ENCODE measurements at regions of chr2 and their contacts with region 1.

Region 1: GRCh38 chr2:68734688-68735525 is at the start of gene ARHGAP25:
- DNase-seq: peak in 7 of 9 experiments; percentile 25 to 83 (median 61)
- ATAC-seq: peak; percentile 65
- H3K4me3 ChIP-seq: peak within 1 kb of the TSS; percentile 61 to 84
- H3K4me3 Mint-ChIP-seq: no peak within 1 kb of the TSS
- H3K27ac ChIP-seq: peak within 1 kb of the TSS; percentile 62 to 81
- H3K27ac Mint-ChIP-seq: no peak within 1 kb of the TSS
- H3K4me1 ChIP-seq: peaks cover 41% of the 10 kb centered on the region
- H3K4me1 Mint-ChIP-seq: peaks cover 38% of the 10 kb centered on the region
- H3K27me3 ChIP-seq: no peaks in the 10 kb centered on the region
- H3K27me3 Mint-ChIP-seq: no peaks in the 10 kb centered on the region
- CTCF ChIP-seq: no peak
- total RNA-seq, gene ARHGAP25: 35.8 to 36.7 TPM

Region 2: DNA sequence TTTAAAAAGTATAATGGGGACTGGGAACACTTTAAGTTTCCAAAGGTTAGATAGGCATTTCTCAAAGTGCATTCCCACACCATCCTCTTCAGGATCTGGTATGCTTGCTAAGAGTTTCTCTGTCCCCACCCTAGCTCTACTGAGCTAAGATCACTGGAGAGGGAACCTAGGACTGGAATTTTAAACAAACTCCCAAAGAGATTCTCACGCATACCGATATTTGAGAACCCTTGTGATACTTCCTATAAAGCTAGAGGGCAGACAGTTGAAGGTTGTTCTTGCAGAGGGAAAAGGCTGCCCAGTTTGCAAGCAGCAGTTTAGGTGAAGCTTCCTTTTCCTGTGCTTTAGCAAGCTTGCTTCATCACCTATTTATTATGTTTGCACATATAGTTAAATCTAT is 418.8 kb before region 1 on chr2:
- CTCF ChIA-PET with region 1: no interaction called
- POLR2A ChIA-PET with region 1: no interaction called
- intact Hi-C with region 1: no loop called
- DNase-seq: no peak
- ATAC-seq: no peak
- H3K4me3 ChIP-seq: no peak overlapping the region
- H3K4me3 Mint-ChIP-seq: no peak overlapping the region
- H3K27ac ChIP-seq: no peak overlapping the region
- H3K27ac Mint-ChIP-seq: no peak overlapping the region
- H3K4me1 ChIP-seq: peaks cover 5% of the 10 kb centered on the region
- H3K4me1 Mint-ChIP-seq: peaks cover 12% of the 10 kb centered on the region
- H3K27me3 ChIP-seq: peaks cover 8 to 9% of the 10 kb centered on the region in 2 experiments
- H3K27me3 Mint-ChIP-seq: peaks cover 49% of the 10 kb centered on the region
- CTCF ChIP-seq: no peak

Region 3: DNA sequence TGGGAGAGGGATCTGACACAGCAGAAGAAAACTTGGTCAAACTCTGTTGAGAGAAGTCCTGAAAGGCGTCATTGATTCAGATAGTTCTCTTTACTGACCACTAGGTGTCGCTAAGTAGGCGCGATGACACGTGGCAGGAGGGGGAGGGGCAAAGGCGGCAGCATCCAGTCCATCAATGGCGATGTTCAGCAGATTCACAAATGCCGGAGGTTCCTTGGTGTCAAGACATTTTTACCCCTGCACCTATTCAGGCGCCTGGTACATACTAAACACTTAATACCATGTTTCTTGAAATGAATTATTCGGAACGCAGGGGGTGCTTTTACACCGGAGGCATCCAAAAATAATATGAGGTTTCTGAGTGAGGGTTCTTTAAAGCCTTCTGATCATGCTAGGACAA is 372.8 kb before region 1 on chr2:
- CTCF ChIA-PET with region 1: no interaction called
- POLR2A ChIA-PET with region 1: no interaction called
- intact Hi-C with region 1: loop called in 1 of 2 experiments (anchors 10 kb)
- DNase-seq: peak; percentile 67 to 92 (median 80)
- ATAC-seq: peak; percentile 90
- H3K4me3 ChIP-seq: peak overlapping the region; percentile 16 to 32
- H3K4me3 Mint-ChIP-seq: peak overlapping the region; percentile 69
- H3K27ac ChIP-seq: peak overlapping the region in 1 of 2 experiments; percentile 72
- H3K27ac Mint-ChIP-seq: peak overlapping the region; percentile 33
- H3K4me1 ChIP-seq: peaks cover 9% of the 10 kb centered on the region
- H3K4me1 Mint-ChIP-seq: peaks cover 25% of the 10 kb centered on the region
- H3K27me3 ChIP-seq: no peaks in the 10 kb centered on the region
- H3K27me3 Mint-ChIP-seq: no peaks in the 10 kb centered on the region
- CTCF ChIP-seq: peak; percentile 73

Region 4: DNA sequence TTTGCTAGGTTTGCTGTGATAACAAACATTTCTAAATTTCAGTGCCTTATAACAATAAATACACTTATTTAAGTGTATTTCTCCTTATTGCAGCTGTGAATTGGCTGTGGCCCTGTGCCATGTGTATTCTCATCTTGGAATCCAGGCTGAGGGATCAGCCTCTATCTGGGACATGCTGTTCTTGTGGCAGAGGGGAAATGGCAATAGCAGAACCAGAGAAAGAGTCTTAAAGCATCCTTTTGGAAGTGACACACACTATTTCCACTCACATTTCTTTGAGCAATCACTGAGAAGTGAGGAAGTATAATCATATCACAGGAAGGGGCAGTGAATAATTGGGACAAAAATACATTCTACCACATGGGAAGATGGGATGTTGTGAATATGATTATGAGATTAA is 157.7 kb before region 1 on chr2:
- CTCF ChIA-PET with region 1: no interaction called
- POLR2A ChIA-PET with region 1: no interaction called
- intact Hi-C with region 1: no loop called
- DNase-seq: no peak
- ATAC-seq: no peak
- H3K4me3 ChIP-seq: no peak overlapping the region
- H3K4me3 Mint-ChIP-seq: no peak overlapping the region
- H3K27ac ChIP-seq: no peak overlapping the region
- H3K27ac Mint-ChIP-seq: no peak overlapping the region
- H3K4me1 ChIP-seq: no peaks in the 10 kb centered on the region
- H3K4me1 Mint-ChIP-seq: no peaks in the 10 kb centered on the region
- H3K27me3 ChIP-seq: no peaks in the 10 kb centered on the region
- H3K27me3 Mint-ChIP-seq: no peaks in the 10 kb centered on the region
- CTCF ChIP-seq: no peak

Region 5: DNA sequence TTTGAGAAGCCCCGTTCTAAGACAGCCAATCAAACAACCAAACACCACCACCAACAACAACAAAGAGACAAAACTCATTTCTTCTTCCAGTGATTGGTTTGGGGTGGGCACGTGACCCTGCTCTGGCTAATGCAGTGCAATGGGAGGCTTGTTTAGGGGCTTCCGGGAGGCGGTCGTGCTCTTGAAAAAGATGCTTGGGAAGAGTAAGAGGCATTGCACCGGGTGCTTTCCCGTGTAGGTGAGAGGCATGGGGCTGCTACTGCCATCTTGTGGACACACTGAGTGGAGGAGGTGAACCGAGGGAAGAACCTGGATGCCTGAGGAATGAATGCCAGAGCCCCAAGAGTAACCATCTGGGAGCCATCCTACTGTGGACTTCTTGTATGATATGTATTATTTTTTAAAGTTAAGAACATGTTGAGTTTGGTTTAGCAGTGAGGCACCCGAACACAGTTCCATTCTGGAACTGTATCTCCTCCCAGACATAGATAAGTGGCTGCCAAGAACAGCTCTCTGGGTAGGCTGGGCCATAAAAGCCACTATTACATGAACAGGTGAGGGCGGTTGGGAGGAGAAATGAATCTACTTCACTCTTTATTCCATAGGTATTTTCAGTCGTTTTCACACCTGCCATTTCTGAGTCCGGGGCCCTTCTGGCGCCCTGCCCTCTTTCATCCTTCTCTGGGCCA is 19.4 kb before region 1 on chr2:
- CTCF ChIA-PET with region 1: interaction called, 21 read pairs
- POLR2A ChIA-PET with region 1: interaction called, 31 read pairs
- intact Hi-C with region 1: loop called in 1 of 2 experiments (anchors 1 kb)
- DNase-seq: peak in 6 of 9 experiments; percentile 16 to 79 (median 60)
- ATAC-seq: peak; percentile 47
- H3K4me3 ChIP-seq: no peak overlapping the region
- H3K4me3 Mint-ChIP-seq: no peak overlapping the region
- H3K27ac ChIP-seq: no peak overlapping the region
- H3K27ac Mint-ChIP-seq: peak overlapping the region; percentile 11
- H3K4me1 ChIP-seq: peaks cover 53% of the 10 kb centered on the region
- H3K4me1 Mint-ChIP-seq: peaks cover 62% of the 10 kb centered on the region
- H3K27me3 ChIP-seq: peaks cover 0 to 3% of the 10 kb centered on the region in 2 experiments
- H3K27me3 Mint-ChIP-seq: no peaks in the 10 kb centered on the region
- CTCF ChIP-seq: no peak

Region 6: GRCh38 chr2:68721482-68722101 is 13.3 kb before region 1 on chr2:
- CTCF ChIA-PET with region 1: interaction called, 18 read pairs
- POLR2A ChIA-PET with region 1: interaction called, 31 read pairs
- intact Hi-C with region 1: loop called in 1 of 2 experiments (anchors 1 kb)
- DNase-seq: peak in 7 of 9 experiments; percentile 16 to 76 (median 46)
- ATAC-seq: peak; percentile 73
- H3K4me3 ChIP-seq: peak overlapping the region in 1 of 2 experiments; percentile 4
- H3K4me3 Mint-ChIP-seq: peak overlapping the region; percentile 72
- H3K27ac ChIP-seq: peak overlapping the region in 1 of 2 experiments; percentile 63
- H3K27ac Mint-ChIP-seq: peak overlapping the region; percentile 87
- H3K4me1 ChIP-seq: peaks cover 71% of the 10 kb centered on the region
- H3K4me1 Mint-ChIP-seq: peaks cover 82% of the 10 kb centered on the region
- H3K27me3 ChIP-seq: no peaks in the 10 kb centered on the region
- H3K27me3 Mint-ChIP-seq: no peaks in the 10 kb centered on the region
- CTCF ChIP-seq: no peak

Region 7: GRCh38 chr2:68766376-68766845 is 31.5 kb after region 1 on chr2:
- CTCF ChIA-PET with region 1: interaction called, 6 read pairs
- POLR2A ChIA-PET with region 1: interaction called, 11 read pairs
- intact Hi-C with region 1: loop called in 1 of 2 experiments (anchors 2 kb)
- DNase-seq: peak; percentile 37 to 91 (median 75)
- ATAC-seq: peak; percentile 62
- H3K4me3 ChIP-seq: peak overlapping the region; percentile 25 to 34
- H3K4me3 Mint-ChIP-seq: peak overlapping the region; percentile 81
- H3K27ac ChIP-seq: peak overlapping the region; percentile 73 to 88
- H3K27ac Mint-ChIP-seq: peak overlapping the region; percentile 100
- H3K4me1 ChIP-seq: peaks cover 98% of the 10 kb centered on the region
- H3K4me1 Mint-ChIP-seq: peaks cover 95% of the 10 kb centered on the region
- H3K27me3 ChIP-seq: no peaks in the 10 kb centered on the region
- H3K27me3 Mint-ChIP-seq: no peaks in the 10 kb centered on the region
- CTCF ChIP-seq: no peak

Region 8: GRCh38 chr2:68837164-68837860 is 102.4 kb after region 1 on chr2:
- CTCF ChIA-PET with region 1: interaction called, 5 read pairs
- POLR2A ChIA-PET with region 1: no interaction called
- intact Hi-C with region 1: loop called in 1 of 2 experiments (anchors 5 kb)
- DNase-seq: peak; percentile 39 to 83 (median 73)
- ATAC-seq: peak; percentile 74
- H3K4me3 ChIP-seq: no peak overlapping the region
- H3K4me3 Mint-ChIP-seq: no peak overlapping the region
- H3K27ac ChIP-seq: no peak overlapping the region
- H3K27ac Mint-ChIP-seq: no peak overlapping the region
- H3K4me1 ChIP-seq: peaks cover 8% of the 10 kb centered on the region
- H3K4me1 Mint-ChIP-seq: peaks cover 23% of the 10 kb centered on the region
- H3K27me3 ChIP-seq: no peaks in the 10 kb centered on the region
- H3K27me3 Mint-ChIP-seq: no peaks in the 10 kb centered on the region
- CTCF ChIP-seq: peak; percentile 82

Region 9: GRCh38 chr2:69272803-69273471 is 538.0 kb after region 1 on chr2:
- CTCF ChIA-PET with region 1: no interaction called
- POLR2A ChIA-PET with region 1: no interaction called
- intact Hi-C with region 1: no loop called
- DNase-seq: no peak
- ATAC-seq: no peak
- H3K4me3 ChIP-seq: no peak overlapping the region
- H3K4me3 Mint-ChIP-seq: no peak overlapping the region
- H3K27ac ChIP-seq: no peak overlapping the region
- H3K27ac Mint-ChIP-seq: no peak overlapping the region
- H3K4me1 ChIP-seq: no peaks in the 10 kb centered on the region
- H3K4me1 Mint-ChIP-seq: no peaks in the 10 kb centered on the region
- H3K27me3 ChIP-seq: peaks cover 0 to 3% of the 10 kb centered on the region in 2 experiments
- H3K27me3 Mint-ChIP-seq: peaks cover 44% of the 10 kb centered on the region
- CTCF ChIP-seq: no peak

Measured in CD8-positive, alpha-beta T cell (primary cell).